ENCODE measurements at regions of chr9 and their contacts with region 1.

Region 1: DNA sequence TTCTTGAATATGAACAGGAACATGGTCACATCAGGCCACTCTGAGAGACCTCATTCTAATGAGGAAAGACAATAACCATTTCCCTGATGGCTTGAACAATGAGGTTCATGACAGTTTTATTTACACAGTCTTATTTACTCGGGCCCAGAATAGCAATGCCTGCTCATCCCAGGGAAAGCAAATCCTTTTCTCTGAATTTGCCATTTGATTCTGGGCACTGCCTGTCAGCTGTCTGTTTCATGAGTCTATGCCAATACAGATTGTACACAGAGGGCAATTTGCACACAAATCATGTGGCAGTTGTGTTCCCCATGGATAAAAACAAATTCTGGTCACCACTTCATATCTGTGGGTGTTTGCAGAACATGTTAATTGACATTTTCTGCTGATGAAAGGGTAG is 492.5 kb downstream of the ACTL7B start:
- DNase-seq: no peak
- H3K4me3 ChIP-seq: no peak overlapping the region
- H3K27ac ChIP-seq: no peak overlapping the region
- H3K4me1 ChIP-seq: no peaks in the 10 kb centered on the region
- H3K27me3 ChIP-seq: no peaks in the 10 kb centered on the region
- CTCF ChIP-seq: no peak
- POLR2A ChIP-seq: no peak

Region 2: DNA sequence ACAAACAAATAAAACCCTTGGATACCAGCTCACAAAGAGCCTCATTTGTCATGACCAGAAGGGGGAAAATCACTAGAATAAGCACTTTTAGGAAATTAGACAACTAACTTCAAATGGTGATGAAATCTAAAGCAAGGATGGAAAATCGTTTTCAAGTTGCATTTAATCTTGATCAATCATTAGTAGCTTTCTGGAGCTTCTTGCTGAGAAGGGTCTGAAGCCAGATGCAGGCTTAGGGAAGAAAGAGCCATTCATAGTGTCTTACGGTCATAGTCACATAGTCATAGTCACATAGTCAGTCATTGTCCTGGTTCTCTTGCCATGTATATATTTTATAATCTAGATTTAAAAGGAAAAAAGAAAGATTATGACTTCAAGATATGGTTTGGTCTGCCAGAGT is 118.0 kb before region 1 on chr9:
- intact Hi-C with region 1: loop called (anchors 5 kb)
- DNase-seq: no peak
- H3K4me3 ChIP-seq: no peak overlapping the region
- H3K27ac ChIP-seq: no peak overlapping the region
- H3K4me1 ChIP-seq: no peaks in the 10 kb centered on the region
- H3K27me3 ChIP-seq: no peaks in the 10 kb centered on the region
- CTCF ChIP-seq: no peak
- POLR2A ChIP-seq: no peak